Activated T-helper 1 cell treated with anti-CD3 and anti-CD28 coated beads, Interleukin-12 subunit alpha, Interleukin-12 subunit beta, Interleukin-2, Interleukin-4 antibody, amounts not matched to agents 30 ng/mL and 10 ng/mL and 1 ng/mL, durations not matched to agents 14 hours and 24 hours and 36 hours (primary cell): ENCODE measurements at regions of chr7 and their contacts with region 1.

Region 1: GRCh38 chr7:127375631-127376030 is 16.9 kb downstream of the ZNF800 start:
- DNase-seq: no peak
- H3K4me3 Mint-ChIP-seq: no peak overlapping the region
- H3K27ac Mint-ChIP-seq: no peak overlapping the region
- H3K4me1 Mint-ChIP-seq: peaks cover 47% of the 10 kb centered on the region
- H3K27me3 Mint-ChIP-seq: no peaks in the 10 kb centered on the region

Region 2: DNA sequence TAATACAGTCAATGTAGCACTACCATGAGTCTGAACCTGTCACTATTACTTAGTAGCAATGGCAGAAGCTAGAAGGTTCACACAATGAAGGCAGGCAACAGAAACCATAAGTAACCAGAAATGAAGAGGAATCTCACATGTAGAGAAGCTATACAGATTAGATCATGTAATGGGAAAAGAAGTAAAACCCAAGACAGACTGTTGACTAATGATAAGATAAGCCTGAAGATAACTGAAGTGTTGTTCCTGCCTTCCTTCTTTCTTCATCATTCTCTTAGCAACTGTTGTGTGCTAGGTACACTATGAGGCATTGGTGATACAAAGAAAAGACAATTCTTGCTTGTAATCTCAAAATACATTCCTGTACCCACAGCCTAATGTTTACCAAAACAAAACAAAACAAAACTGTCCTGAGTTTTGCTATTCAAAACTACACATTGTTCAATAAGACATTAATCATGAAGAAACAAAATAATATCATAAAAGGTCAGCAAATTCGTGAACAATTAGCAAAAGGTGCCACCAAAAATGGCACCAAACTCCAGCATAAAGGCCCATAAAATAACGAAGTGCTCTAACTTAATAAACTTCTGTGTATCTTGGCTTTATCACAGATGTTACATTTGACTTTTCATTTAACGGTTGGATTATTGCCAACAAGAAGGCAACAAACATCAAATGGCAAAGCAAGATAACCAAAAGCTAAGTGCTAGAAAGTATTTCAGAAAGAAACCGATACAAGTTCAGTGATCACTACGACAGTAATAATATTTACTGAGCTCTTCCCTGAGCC is 10.3 kb before region 1 on chr7:
- intact Hi-C with region 1: loop called (anchors 2 kb)
- DNase-seq: no peak
- H3K4me3 Mint-ChIP-seq: no peak overlapping the region
- H3K27ac Mint-ChIP-seq: no peak overlapping the region
- H3K4me1 Mint-ChIP-seq: peaks cover 10% of the 10 kb centered on the region
- H3K27me3 Mint-ChIP-seq: no peaks in the 10 kb centered on the region

Region 3: GRCh38 chr7:127413962-127414361 is 38.3 kb after region 1 on chr7:
- intact Hi-C with region 1: loop called (anchors 5 kb)
- DNase-seq: no peak
- H3K4me3 Mint-ChIP-seq: peak overlapping the region; percentile 62
- H3K27ac Mint-ChIP-seq: peak overlapping the region; percentile 66
- H3K4me1 Mint-ChIP-seq: peaks cover 54% of the 10 kb centered on the region
- H3K27me3 Mint-ChIP-seq: peaks cover 20% of the 10 kb centered on the region

Region 4: DNA sequence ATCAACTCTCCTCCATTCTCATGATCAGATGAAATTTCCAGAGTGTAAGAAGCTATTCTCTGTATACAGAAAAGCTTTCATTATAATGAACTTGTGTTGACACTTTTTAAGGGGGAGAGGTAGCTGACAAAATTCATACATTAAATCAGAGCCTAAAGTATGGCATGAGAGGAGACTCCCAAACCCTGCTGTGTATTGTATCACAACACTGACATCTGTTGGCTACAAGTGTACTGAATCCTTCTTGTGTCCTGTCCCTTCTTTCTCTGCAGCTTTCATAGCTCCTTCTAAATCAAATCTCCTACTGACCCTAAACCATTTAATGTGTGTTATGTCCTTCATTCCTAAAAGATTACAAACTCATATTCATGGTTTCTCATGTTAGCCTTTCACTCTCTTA is 138.9 kb after region 1 on chr7:
- intact Hi-C with region 1: no loop called
- DNase-seq: no peak
- H3K4me3 Mint-ChIP-seq: no peak overlapping the region
- H3K27ac Mint-ChIP-seq: no peak overlapping the region
- H3K4me1 Mint-ChIP-seq: no peaks in the 10 kb centered on the region
- H3K27me3 Mint-ChIP-seq: peaks cover 10% of the 10 kb centered on the region